Posterior vena cava (tissue), 2 donors: ENCODE measurements at regions of chr19 and their contacts with region 1.

Region 1: GRCh38 chr19:13093407-13094105 is 9.1 kb downstream of the LYL1 start:
- DNase-seq: peak; percentile 95

Region 2: GRCh38 chr19:12983542-12984142 is 109.9 kb before region 1 on chr19:
- intact Hi-C with region 1: loop called (anchors 2 to 5 kb)
- DNase-seq: peak; percentile 93

Region 3: DNA sequence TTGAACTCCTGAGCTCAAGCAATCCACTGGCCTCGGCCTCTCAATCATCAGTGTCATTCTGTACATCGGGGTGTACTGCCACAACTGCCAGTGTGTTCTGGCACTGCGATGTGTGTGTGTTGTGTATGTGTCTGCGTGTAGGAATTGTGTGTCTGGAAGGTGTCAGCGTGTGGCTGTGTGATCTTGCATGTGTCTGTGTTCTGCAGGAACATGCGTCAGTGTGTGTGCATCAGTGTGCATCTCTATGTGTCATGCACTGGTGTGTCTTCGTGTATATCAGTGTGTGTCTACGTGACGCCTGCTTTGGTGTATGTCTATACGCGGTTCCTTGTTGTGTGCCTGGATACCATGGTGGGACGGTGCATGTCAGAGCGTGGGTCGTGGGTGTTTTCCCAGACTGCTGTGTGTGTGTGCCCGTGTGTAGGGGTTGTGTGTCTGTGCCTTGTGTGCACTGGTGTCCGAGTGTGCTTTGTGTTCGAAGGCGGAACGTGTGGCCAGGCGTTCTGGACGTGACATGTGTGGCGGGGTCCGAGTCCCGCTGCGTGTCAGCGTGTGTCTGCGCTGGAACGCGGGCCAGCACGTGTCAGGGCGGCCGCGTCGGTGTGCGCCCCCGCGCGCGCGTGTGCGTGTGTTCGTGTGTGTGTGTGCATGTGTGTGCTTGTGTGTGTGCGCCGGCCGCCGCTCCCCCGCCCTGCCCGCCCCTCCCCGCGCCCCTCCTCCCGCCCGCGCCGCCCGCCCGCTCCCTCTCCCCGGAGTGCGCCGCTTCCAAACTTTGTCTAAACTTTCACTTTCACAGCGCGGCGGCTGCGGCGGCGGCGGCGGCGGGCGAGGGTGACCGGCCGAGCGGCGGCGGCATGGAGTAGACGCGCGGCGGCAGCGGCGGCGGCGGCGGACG is 98.6 kb before region 1 on chr19 and contains the start of gene NFIX:
- intact Hi-C with region 1: loop called in 1 of 2 experiments (anchors 5 kb)
- DNase-seq: no peak
- total RNA-seq, gene NFIX: 242 to 327 TPM

Region 4: DNA sequence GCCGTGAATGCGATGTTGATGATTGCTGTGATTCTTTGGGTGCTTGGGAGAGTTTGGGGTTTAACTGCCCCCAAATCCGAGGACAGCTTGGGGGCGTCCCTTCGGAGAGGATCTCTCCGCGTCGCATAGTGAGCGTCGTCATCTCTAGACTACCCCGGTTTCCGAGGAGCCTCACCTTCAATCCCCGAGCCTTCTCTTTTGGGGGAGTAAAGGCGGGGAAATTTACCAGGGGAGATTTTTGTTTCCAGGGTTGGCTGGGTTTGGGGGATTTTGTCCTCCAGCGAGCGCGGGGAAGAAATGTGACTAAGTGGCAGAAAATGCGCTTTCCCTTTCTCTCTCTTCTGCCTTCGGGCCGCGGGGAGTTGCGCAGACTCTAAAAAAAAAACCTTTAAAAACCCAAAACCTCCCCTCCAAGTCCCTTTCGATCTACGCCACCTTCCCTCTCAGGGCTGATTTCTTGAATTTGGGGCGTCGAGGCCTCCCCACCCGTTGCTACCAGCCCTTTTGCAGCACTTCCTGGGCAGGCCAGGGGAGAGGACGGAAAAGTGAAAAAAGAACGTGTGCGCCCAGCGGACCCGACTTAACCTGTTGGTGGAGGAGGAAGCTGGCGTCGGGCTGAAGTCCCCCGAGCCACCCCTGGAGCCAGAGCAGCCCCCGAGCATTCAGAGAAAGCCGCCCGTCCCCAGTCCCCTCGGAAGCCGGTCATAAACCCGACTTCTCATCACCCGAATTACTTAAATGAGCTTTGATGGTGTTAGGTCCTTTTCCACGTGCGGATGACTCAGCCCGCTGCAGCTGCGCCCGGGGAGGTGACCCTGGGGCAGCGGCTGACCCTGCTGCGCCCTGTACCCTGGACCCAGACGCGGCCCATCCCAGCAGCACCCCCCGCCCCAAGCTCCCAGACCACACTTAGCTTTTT is 80.6 kb before region 1 on chr19:
- intact Hi-C with region 1: loop called in 1 of 2 experiments (anchors 10 kb)
- DNase-seq: peak; percentile 93